Heart right ventricle (tissue), 16 donors: ENCODE measurements at regions of chr19 and their contacts with region 1.

Region 1: GRCh38 chr19:56718231-56718630 is 46.7 kb upstream of the ZNF835 start:
- DNase-seq: no peak
- ATAC-seq: no peak
- H3K4me3 ChIP-seq: no peak overlapping the region
- H3K27ac ChIP-seq: no peak overlapping the region
- H3K4me1 ChIP-seq: no peaks in the 10 kb centered on the region
- H3K27me3 ChIP-seq: peaks cover 0 to 7% (median 0%) of the 10 kb centered on the region in 7 donors
- CTCF ChIP-seq: no peak

Region 2: GRCh38 chr19:56660381-56661107 is 57.7 kb before region 1 on chr19:
- intact Hi-C with region 1: loop called in 1 of 10 experiments (anchors 2 kb)
- DNase-seq: peak; percentile 27 to 62
- ATAC-seq: peak; percentile 23 to 86 (median 68)
- H3K4me3 ChIP-seq: peak overlapping the region in 7 of 10 donors; percentile 12 to 43 (median 31)
- H3K27ac ChIP-seq: no peak overlapping the region
- H3K4me1 ChIP-seq: peaks cover 0 to 7% (median 5%) of the 10 kb centered on the region in 9 donors
- H3K27me3 ChIP-seq: no peaks in the 10 kb centered on the region
- CTCF ChIP-seq: peak in 8 of 9 donors; percentile 32 to 59 (median 50)